K562 (cell line): ENCODE measurements at regions of chr15 and their contacts with region 1.

Region 1: GRCh38 chr15:27059610-27060202 is 88.7 kb downstream of the GABRG3 start:
- DNase-seq: peak; percentile 80 to 90 (median 85)
- ATAC-seq: peak; percentile 91
- H3K4me3 ChIP-seq: no peak overlapping the region
- H3K27ac ChIP-seq: no peak overlapping the region
- H3K4me1 ChIP-seq: no peaks in the 10 kb centered on the region
- H3K27me3 ChIP-seq: peaks cover 8 to 44% of the 10 kb centered on the region in 2 experiments
- CTCF ChIP-seq: peak; percentile 64 to 75 (median 71)
- EP300 ChIP-seq: no peak
- POLR2A ChIP-seq: no peak
- RAD21 ChIP-seq: peak in 1 of 2 experiments; percentile 73; a peak in 2 of 4 replicates

Region 2: GRCh38 chr15:27250223-27250622 is 190.5 kb after region 1 on chr15:
- CTCF ChIA-PET with region 1: no interaction called
- POLR2A ChIA-PET with region 1: no interaction called
- in situ Hi-C with region 1: no loop called
- intact Hi-C with region 1: loop called (anchors 5 kb)
- DNase-seq: peak in 1 of 4 experiments; percentile 22
- ATAC-seq: peak; percentile 54; the same call in 1 of the 3 replicates
- H3K4me3 ChIP-seq: no peak overlapping the region
- H3K27ac ChIP-seq: no peak overlapping the region
- H3K4me1 ChIP-seq: peaks cover 0 to 5% of the 10 kb centered on the region in 2 experiments; a peak in 2 of 5 replicates
- H3K27me3 ChIP-seq: no peaks in the 10 kb centered on the region
- CTCF ChIP-seq: peak in 2 of 3 experiments; percentile 10 to 38; a peak in 3 of 6 replicates
- EP300 ChIP-seq: no peak
- POLR2A ChIP-seq: no peak
- RAD21 ChIP-seq: peak in 1 of 2 experiments; percentile 47; a peak in 2 of 4 replicates

Region 3: DNA sequence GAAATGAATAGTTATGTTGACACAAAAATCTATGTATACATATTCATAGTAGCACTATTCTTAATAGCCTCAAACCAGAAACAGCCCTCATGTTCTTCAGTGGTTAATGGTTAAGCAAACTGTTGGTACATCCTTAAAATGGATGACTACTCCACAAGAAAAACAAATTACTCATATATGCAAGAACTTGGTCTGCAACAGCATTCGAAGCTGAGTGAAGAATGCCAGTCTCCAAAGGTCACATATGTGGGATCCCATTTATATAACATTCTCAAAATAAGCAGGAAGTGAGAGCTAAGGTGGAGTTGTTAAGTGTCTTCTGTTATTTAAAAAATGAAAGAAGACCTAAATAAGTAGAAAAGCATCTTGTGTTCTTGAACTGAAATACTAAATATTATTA is 277.0 kb after region 1 on chr15:
- CTCF ChIA-PET with region 1: no interaction called
- POLR2A ChIA-PET with region 1: no interaction called
- in situ Hi-C with region 1: no loop called
- intact Hi-C with region 1: no loop called
- DNase-seq: no peak
- ATAC-seq: no peak
- H3K4me3 ChIP-seq: no peak overlapping the region
- H3K27ac ChIP-seq: no peak overlapping the region
- H3K4me1 ChIP-seq: no peaks in the 10 kb centered on the region
- H3K27me3 ChIP-seq: no peaks in the 10 kb centered on the region
- CTCF ChIP-seq: no peak
- EP300 ChIP-seq: no peak
- POLR2A ChIP-seq: no peak
- RAD21 ChIP-seq: no peak

Region 4: GRCh38 chr15:27358751-27359434 is 299.2 kb after region 1 on chr15:
- CTCF ChIA-PET with region 1: interaction called, 4 read pairs
- POLR2A ChIA-PET with region 1: no interaction called
- in situ Hi-C with region 1: loop called (anchors 10 kb)
- intact Hi-C with region 1: loop called (anchors 1 kb)
- DNase-seq: peak; percentile 49 to 63 (median 55)
- ATAC-seq: peak; percentile 85
- H3K4me3 ChIP-seq: no peak overlapping the region
- H3K27ac ChIP-seq: no peak overlapping the region
- H3K4me1 ChIP-seq: peaks cover 0 to 6% of the 10 kb centered on the region in 2 experiments; a peak in 2 of 5 replicates
- H3K27me3 ChIP-seq: no peaks in the 10 kb centered on the region
- CTCF ChIP-seq: peak; percentile 71 to 86 (median 77)
- EP300 ChIP-seq: no peak
- POLR2A ChIP-seq: no peak
- RAD21 ChIP-seq: peak; percentile 63 to 79